Posterior vena cava (tissue), 2 donors: ENCODE measurements at regions of chr19 and their contacts with region 1.

Region 1: GRCh38 chr19:1336079-1336684 is 47.5 kb upstream of the NDUFS7 start:
- DNase-seq: no peak

Region 2: DNA sequence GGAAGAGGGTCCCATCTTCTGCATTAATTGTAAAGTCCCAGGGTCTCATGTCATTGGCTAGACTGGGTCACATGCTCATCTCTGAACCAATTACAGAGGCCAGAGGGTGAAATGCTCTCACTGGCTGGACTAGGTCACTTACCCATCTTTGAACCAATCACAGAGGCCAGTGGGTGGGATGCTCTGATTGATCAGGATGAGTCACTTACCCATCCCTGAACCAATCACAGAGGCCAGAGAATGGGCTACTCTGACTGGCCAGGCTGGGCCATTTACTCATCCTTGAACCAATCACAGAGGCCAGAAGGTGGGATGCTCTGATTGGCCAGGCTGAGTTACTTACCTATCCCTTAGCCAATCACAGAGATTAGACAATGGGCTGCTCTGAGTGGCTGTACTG is 580.0 kb before region 1 on chr19:
- intact Hi-C with region 1: no loop called
- DNase-seq: no peak

Region 3: GRCh38 chr19:1287354-1288225 is 48.6 kb before region 1 on chr19:
- intact Hi-C with region 1: loop called in 1 of 2 experiments (anchors 2 kb)
- DNase-seq: no peak

Region 4: GRCh38 chr19:1875646-1876495 is 539.7 kb after region 1 on chr19:
- intact Hi-C with region 1: no loop called
- DNase-seq: peak; percentile 98